A673 (cell line): ENCODE measurements at regions of chr5 and their contacts with region 1.

Region 1: DNA sequence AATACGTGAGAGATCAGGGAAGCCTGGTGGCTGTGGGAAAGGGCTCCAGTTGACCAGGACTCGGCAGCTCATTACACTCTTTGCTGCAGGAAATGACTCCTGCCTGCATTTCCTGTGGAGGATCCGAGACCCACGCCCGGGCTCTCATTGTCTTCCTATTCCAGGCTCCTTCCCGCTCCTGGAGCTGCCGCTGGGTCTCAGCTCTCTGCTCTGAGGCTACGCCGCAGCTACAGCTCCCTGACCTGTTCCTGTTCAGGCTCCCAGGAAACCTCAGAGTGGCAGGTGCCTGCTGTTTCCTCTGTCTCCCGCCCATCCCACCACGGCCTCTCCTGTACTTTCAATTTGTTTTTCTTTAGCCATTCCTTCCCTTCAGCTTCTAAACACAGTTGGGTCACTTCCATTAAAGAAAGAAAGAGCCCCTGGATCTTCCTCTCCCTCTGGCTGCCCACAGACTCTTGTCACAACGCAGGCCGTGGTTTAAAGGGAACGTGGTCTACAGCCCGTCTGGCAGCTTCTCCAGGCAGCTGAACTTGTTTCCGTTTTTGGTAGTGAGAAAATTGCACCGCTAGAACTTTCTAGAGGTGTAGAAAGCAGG is 71.5 kb downstream of the IL6ST start:
- DNase-seq: peak; percentile 65
- H3K4me3 ChIP-seq: peak overlapping the region; percentile 29
- H3K27ac ChIP-seq: no peak overlapping the region
- H3K4me1 ChIP-seq: no peaks in the 10 kb centered on the region
- H3K27me3 ChIP-seq: no peaks in the 10 kb centered on the region
- CTCF ChIP-seq: no peak

Region 2: GRCh38 chr5:55724281-55724680 is 199.0 kb before region 1 on chr5:
- CTCF ChIA-PET with region 1: no interaction called
- POLR2A ChIA-PET with region 1: no interaction called
- intact Hi-C with region 1: loop called (anchors 10 kb)
- DNase-seq: no peak
- H3K4me3 ChIP-seq: no peak overlapping the region
- H3K27ac ChIP-seq: no peak overlapping the region
- H3K4me1 ChIP-seq: no peaks in the 10 kb centered on the region
- H3K27me3 ChIP-seq: no peaks in the 10 kb centered on the region
- CTCF ChIP-seq: no peak